Posterior vena cava (tissue), 2 donors: ENCODE measurements at regions of chr1 and their contacts with region 1.

Region 1: GRCh38 chr1:18972531-18972930 is 16.1 kb upstream of the IFFO2 start:
- DNase-seq: peak; percentile 30

Region 2: DNA sequence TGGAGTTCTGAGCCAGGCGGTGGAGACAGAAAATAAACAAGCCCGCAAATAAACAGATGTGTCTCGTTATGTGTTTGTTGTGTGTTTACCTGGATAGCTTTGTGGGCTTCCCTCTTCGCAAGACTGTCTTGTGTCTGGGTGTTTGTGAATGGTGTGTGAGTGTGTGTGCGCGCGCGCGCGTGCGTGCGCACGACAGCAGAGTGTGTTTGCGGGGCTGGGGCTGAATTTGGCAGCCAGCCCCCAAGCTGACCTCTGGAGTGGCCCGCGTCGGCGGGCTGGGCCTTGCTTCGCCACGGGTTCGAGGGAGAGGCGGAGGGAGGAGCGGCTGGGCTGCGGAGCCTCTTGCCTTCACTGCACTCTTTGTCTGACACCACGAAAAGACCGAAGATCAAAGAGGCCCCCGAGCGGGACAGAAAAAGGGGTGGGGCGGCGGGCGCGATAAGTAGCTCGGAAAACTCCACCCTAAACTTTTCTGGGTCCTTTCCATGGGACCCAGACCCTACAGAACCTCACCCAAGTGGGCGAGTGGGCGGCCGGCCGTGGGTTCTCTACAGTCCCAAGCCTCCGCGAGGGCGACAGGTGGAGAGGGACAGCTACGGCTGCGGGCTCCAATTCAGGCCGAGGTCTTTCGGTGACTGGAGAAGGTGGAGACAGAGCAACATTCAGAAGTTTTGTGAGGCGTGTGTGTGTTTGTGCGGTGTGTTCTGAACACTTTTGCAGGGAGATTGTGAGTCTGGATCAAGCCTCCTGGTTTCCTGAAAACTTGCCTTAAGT is 327.4 kb before region 1 on chr1:
- intact Hi-C with region 1: loop called in 1 of 2 experiments (anchors 5 kb)
- DNase-seq: no peak

Region 3: DNA sequence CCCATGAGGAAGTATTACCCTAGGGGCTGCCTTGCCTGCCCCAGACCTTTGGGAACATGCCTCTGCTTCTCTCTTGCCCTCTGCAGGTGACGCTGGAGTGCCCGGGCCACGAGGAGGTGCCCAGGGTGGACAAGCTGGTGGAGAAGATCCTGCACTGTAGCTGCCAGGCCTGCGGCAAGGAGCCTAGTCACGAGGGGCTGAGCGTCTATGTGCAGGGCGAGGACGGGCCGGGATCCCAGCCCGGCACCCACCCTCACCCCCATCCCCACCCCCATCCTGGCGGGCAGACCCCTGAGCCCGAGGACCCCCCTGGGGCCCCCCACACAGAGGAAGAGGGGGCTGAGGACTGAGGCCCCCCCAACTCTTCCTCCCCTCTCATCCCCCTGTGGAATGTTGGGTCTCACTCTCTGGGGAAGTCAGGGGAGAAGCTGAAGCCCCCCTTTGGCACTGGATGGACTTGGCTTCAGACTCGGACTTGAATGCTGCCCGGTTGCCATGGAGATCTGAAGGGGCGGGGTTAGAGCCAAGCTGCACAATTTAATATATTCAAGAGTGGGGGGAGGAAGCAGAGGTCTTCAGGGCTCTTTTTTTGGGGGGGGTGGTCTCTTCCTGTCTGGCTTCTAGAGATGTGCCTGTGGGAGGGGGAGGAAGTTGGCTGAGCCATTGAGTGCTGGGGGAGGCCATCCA is 684.4 kb after region 1 on chr1:
- intact Hi-C with region 1: loop called in 1 of 2 experiments (anchors 5 kb)
- DNase-seq: no peak